GM12878 (cell line): ENCODE measurements at regions of chr10 and their contacts with region 1.

Region 1: DNA sequence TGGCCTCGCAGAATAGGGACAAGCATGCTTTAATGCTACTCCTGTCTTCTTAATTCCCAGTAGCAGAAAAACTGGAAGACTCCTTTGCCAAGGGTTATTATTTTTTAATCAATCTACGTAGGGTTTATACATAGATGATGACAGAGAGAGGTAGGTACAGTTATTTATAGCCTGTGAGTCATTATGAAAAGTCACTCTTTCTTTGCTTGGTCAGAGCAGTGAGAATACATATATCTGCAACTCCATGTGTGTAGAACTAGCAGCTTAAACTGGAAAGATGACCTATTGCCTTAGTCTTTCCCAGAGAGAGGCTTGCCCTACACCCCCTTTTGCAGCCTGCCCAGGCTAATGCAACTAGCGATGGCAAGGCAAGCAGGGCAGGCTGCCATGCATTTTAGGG is 1050.6 kb downstream of the NRG3 start:
- DNase-seq: no peak
- ATAC-seq: peak; percentile 87
- H3K4me3 ChIP-seq: no peak overlapping the region
- H3K27ac ChIP-seq: peak overlapping the region; percentile 49; the same call in 1 of the 2 replicates
- H3K4me1 ChIP-seq: peaks cover 16% of the 10 kb centered on the region
- H3K27me3 ChIP-seq: no peaks in the 10 kb centered on the region
- CTCF ChIP-seq: no peak
- EP300 ChIP-seq: no peak
- POLR2A ChIP-seq: no peak
- RAD21 ChIP-seq: no peak

Region 2: GRCh38 chr10:82914655-82915136 is 10.9 kb before region 1 on chr10:
- CTCF ChIA-PET with region 1: interaction called, 22 read pairs
- POLR2A ChIA-PET with region 1: interaction called, 15 read pairs
- RAD21 ChIA-PET with region 1: interaction called, 40 read pairs
- SMC1A ChIA-PET with region 1: interaction called, 46 read pairs
- in situ Hi-C with region 1: no loop called
- intact Hi-C with region 1: loop called (anchors 1 kb)
- DNase-seq: peak; percentile 55
- ATAC-seq: peak; percentile 94
- H3K4me3 ChIP-seq: no peak overlapping the region
- H3K27ac ChIP-seq: no peak overlapping the region
- H3K4me1 ChIP-seq: no peaks in the 10 kb centered on the region
- H3K27me3 ChIP-seq: no peaks in the 10 kb centered on the region
- CTCF ChIP-seq: no peak
- EP300 ChIP-seq: no peak
- POLR2A ChIP-seq: no peak
- RAD21 ChIP-seq: peak; percentile 10; the same call in 1 of the 2 replicates

Region 3: DNA sequence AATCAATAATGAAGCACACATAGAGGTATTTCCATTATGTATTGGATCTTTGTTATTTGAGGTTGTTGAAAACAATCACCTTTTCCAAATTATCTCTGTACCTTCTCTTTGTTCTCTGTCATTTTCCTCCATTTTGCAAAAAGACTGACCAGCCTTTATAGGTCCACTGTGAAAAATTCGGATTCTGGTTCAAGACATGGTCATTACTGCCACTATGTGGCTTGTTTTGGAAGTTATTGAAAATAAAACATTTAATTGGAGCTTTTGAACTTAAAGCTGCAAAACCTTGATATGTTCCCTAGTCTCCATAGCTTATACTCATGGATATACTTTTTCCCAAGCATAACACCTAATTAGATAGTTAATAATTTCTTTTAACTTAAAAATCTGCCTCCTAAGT is 43.9 kb after region 1 on chr10:
- CTCF ChIA-PET with region 1: interaction called, 12 read pairs
- POLR2A ChIA-PET with region 1: no interaction called
- RAD21 ChIA-PET with region 1: interaction called, 4 read pairs
- SMC1A ChIA-PET with region 1: interaction called, 13 read pairs
- in situ Hi-C with region 1: no loop called
- intact Hi-C with region 1: no loop called
- DNase-seq: no peak
- ATAC-seq: peak; percentile 66
- H3K4me3 ChIP-seq: no peak overlapping the region
- H3K27ac ChIP-seq: no peak overlapping the region
- H3K4me1 ChIP-seq: no peaks in the 10 kb centered on the region
- H3K27me3 ChIP-seq: no peaks in the 10 kb centered on the region
- CTCF ChIP-seq: peak in 2 of 3 experiments; percentile 18 to 55; a peak in 3 of 6 replicates
- EP300 ChIP-seq: no peak
- POLR2A ChIP-seq: no peak
- RAD21 ChIP-seq: peak; percentile 90

Region 4: GRCh38 chr10:84179059-84179710 is 1253.6 kb after region 1 on chr10:
- CTCF ChIA-PET with region 1: no interaction called
- POLR2A ChIA-PET with region 1: no interaction called
- RAD21 ChIA-PET with region 1: no interaction called
- SMC1A ChIA-PET with region 1: no interaction called
- in situ Hi-C with region 1: no loop called
- intact Hi-C with region 1: loop called (anchors 10 kb)
- DNase-seq: no peak
- ATAC-seq: peak; percentile 90
- H3K4me3 ChIP-seq: no peak overlapping the region
- H3K27ac ChIP-seq: no peak overlapping the region
- H3K4me1 ChIP-seq: peaks cover 26% of the 10 kb centered on the region
- H3K27me3 ChIP-seq: no peaks in the 10 kb centered on the region
- CTCF ChIP-seq: no peak
- EP300 ChIP-seq: no peak
- POLR2A ChIP-seq: no peak
- RAD21 ChIP-seq: no peak